IMR-90 (cell line): ENCODE measurements at regions of chr16 and their contacts with region 1.

Region 1: DNA sequence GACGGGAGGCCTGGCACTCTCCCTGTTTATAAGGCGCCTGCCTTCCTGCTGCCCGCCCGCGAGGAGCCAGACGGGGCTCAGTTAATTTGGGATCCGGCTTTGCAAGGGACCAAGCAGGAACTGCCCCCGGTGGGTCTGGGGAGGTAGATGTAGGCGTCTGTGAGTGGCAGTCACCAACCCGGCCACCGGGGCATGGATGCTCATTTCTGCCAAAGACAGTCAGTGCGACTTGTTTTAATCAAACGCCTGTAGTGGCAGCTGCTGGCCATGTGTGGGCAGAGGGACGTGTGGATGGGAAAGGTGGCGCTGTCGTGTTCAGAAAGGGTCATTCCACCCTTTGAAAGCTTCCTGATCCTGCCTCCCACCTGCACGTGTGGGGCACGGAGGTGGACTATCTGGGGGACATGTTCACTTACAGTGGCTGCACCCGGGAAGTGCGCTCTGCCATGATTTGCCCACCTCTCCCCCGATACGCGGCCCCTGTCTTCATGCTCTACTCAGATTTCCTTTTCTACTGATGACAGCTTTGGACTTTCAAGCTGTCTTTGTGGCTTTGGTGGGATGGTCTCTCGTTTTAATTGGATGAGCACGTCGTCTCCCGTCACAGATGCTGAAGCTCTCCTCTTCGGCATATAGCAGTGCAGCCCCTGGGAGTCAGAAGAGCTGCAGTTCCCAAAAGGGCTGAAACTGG is 60.3 kb upstream of the CIBAR2 start:
- DNase-seq: peak; percentile 53
- ATAC-seq: no peak
- H3K4me3 ChIP-seq: peak overlapping the region; percentile 51
- H3K27ac ChIP-seq: peak overlapping the region; percentile 74
- H3K4me1 ChIP-seq: peaks cover 46% of the 10 kb centered on the region
- H3K27me3 ChIP-seq: no peaks in the 10 kb centered on the region
- CTCF ChIP-seq: peak; percentile 42
- POLR2A ChIP-seq: no peak; the same call in 1 of the 2 replicates
- RAD21 ChIP-seq: peak; percentile 29

Region 2: DNA sequence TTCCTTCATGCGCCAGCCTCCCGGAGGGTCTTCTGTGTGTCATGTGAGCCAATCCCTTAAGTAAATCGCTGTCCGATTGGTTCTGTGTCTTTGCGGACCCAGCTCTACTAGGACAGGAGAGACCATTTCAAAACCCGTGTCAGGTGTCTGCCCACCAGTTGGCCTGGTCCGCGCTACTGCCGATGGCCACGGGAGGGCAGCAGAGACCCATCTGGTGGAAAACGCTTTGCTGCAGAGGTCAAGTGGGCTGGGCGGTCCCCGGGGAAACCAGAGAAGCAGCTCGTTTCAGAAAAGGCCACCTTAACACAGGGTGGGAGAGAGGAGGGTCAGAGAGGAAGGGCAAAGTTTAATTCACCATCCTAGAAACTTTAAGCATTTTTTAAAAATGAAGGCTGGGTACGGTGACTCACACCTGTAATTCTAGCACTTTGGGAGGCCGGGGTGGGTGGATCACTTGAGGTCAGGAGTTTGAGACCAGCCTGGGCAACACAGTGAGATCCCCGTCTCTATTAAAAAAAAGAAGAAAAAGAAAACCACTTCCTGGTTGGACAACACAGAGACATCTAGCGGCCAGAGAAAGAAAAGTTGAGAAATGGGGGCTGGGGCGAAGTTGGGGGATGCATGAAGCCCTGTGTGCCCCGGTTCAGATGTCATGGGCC is 57.6 kb before region 1 on chr16:
- CTCF ChIA-PET with region 1: interaction called, 13 read pairs
- POLR2A ChIA-PET with region 1: no interaction called
- dilution Hi-C with region 1: no loop called
- in situ Hi-C with region 1: no loop called
- intact Hi-C with region 1: no loop called
- DNase-seq: peak; percentile 74
- ATAC-seq: peak; percentile 99
- H3K4me3 ChIP-seq: no peak overlapping the region
- H3K27ac ChIP-seq: peak overlapping the region; percentile 5; the same call in 1 of the 2 replicates
- H3K4me1 ChIP-seq: no peaks in the 10 kb centered on the region; the same call in 1 of the 2 replicates
- H3K27me3 ChIP-seq: no peaks in the 10 kb centered on the region
- CTCF ChIP-seq: peak; percentile 97
- POLR2A ChIP-seq: peak; percentile 51; the same call in 1 of the 2 replicates
- RAD21 ChIP-seq: peak; percentile 99

Region 3: DNA sequence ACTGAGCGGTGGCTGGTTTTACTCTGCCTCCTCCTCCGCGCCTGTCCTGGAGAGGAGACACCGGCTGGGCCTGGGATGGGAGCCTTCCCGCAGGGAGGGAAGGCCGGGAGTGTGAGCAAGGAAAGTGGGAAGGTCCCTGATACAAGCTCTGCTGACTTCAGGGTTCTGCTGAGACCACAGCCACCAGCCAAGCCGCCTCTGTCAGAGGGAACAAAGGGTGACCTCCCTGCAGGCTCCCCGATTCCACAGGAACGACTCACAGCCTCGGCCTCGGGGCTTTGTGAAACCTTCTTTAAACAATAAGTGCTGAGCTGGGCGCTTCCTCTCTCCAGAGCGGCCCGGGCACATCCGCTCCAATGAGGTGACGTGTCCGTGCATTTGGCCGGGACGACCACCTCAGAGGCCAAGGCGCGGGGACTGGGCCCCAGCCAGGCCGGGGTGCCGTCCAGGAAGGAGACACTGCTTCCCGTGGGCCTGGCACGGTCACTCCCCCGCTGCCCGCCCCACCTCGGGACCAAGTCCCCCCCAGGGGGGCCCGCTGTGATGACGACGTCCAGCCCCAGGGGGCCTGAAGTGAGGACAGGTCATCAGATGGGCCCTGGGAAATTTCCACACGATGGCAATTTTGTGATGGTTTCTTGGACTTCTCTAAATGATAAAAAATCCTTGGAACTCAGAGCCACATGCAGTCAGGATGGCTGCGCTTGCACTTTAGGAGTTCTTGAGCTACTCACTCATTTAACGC is 48.5 kb before region 1 on chr16:
- CTCF ChIA-PET with region 1: interaction called, 3 read pairs
- POLR2A ChIA-PET with region 1: interaction called, 5 read pairs
- dilution Hi-C with region 1: no loop called
- in situ Hi-C with region 1: no loop called
- intact Hi-C with region 1: loop called (anchors 2 kb)
- DNase-seq: peak; percentile 87
- ATAC-seq: peak; percentile 79
- H3K4me3 ChIP-seq: no peak overlapping the region
- H3K27ac ChIP-seq: peak overlapping the region; percentile 87
- H3K4me1 ChIP-seq: peaks cover 20% of the 10 kb centered on the region
- H3K27me3 ChIP-seq: no peaks in the 10 kb centered on the region
- CTCF ChIP-seq: no peak
- POLR2A ChIP-seq: peak; percentile 37
- RAD21 ChIP-seq: no peak

Region 4: DNA sequence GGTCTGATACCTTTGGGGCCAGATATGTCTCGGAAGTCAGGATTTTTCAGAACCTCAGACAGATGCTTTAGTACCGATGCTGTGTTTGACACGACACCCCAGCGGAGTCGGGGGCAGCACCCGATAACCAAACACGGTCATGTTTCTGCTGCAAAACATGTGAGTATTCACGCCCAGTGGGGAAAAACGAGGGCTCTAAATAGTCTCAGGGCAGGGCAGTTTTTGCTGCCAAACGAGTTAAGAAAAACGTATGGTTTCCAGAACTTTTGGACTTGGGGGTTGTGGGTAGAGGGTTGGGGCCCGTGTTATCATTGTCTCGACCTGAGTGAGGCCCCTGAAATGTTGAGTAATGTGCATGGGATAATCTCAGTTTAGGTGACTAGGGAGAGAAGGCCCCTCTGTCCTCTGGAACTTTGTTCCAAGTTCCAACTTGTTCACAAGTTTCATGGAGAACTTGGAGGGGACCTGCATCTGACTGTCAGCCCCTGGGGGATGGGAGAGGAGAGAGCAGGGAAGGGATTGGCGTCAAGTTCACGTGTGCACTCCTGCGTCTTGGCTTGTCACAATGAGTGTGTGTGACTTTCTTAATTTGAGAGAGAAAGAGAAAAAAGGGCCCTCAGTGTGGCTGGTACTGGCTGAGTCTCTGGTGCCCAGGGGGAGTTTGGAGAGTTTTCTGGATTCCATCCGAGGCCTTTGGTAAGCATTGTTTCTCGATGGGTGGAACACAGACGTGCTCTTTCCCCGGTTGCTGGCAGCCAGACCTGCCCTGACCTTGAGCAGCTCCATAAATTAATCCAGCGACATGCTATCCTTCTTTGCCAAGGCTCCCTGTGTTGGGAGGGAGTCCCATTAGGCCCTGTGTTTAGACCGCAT is 23.5 kb after region 1 on chr16:
- CTCF ChIA-PET with region 1: interaction called, 6 read pairs
- POLR2A ChIA-PET with region 1: no interaction called
- dilution Hi-C with region 1: no loop called
- in situ Hi-C with region 1: no loop called
- intact Hi-C with region 1: loop called (anchors 2 kb)
- DNase-seq: no peak
- ATAC-seq: no peak
- H3K4me3 ChIP-seq: no peak overlapping the region
- H3K27ac ChIP-seq: no peak overlapping the region
- H3K4me1 ChIP-seq: peaks cover 63% of the 10 kb centered on the region
- H3K27me3 ChIP-seq: no peaks in the 10 kb centered on the region
- CTCF ChIP-seq: no peak
- POLR2A ChIP-seq: no peak
- RAD21 ChIP-seq: no peak

Region 5: GRCh38 chr16:85204242-85205010 is 31.8 kb after region 1 on chr16:
- CTCF ChIA-PET with region 1: interaction called, 3 read pairs
- POLR2A ChIA-PET with region 1: interaction called, 3 read pairs
- dilution Hi-C with region 1: no loop called
- in situ Hi-C with region 1: no loop called
- intact Hi-C with region 1: loop called (anchors 1 kb)
- DNase-seq: peak; percentile 93
- ATAC-seq: no peak
- H3K4me3 ChIP-seq: no peak overlapping the region
- H3K27ac ChIP-seq: peak overlapping the region; percentile 74
- H3K4me1 ChIP-seq: peaks cover 66% of the 10 kb centered on the region
- H3K27me3 ChIP-seq: no peaks in the 10 kb centered on the region
- CTCF ChIP-seq: no peak
- POLR2A ChIP-seq: no peak
- RAD21 ChIP-seq: peak; percentile 9; the same call in 1 of the 2 replicates

Region 6: GRCh38 chr16:85220125-85220839 is 47.7 kb after region 1 on chr16:
- CTCF ChIA-PET with region 1: interaction called, 3 read pairs
- POLR2A ChIA-PET with region 1: no interaction called
- dilution Hi-C with region 1: no loop called
- in situ Hi-C with region 1: no loop called
- intact Hi-C with region 1: loop called (anchors 5 kb)
- DNase-seq: peak; percentile 85
- ATAC-seq: peak; percentile 85
- H3K4me3 ChIP-seq: peak overlapping the region; percentile 2; the same call in 1 of the 2 replicates
- H3K27ac ChIP-seq: peak overlapping the region; percentile 93
- H3K4me1 ChIP-seq: peaks cover 34% of the 10 kb centered on the region
- H3K27me3 ChIP-seq: no peaks in the 10 kb centered on the region
- CTCF ChIP-seq: no peak
- POLR2A ChIP-seq: no peak
- RAD21 ChIP-seq: no peak

Region 7: DNA sequence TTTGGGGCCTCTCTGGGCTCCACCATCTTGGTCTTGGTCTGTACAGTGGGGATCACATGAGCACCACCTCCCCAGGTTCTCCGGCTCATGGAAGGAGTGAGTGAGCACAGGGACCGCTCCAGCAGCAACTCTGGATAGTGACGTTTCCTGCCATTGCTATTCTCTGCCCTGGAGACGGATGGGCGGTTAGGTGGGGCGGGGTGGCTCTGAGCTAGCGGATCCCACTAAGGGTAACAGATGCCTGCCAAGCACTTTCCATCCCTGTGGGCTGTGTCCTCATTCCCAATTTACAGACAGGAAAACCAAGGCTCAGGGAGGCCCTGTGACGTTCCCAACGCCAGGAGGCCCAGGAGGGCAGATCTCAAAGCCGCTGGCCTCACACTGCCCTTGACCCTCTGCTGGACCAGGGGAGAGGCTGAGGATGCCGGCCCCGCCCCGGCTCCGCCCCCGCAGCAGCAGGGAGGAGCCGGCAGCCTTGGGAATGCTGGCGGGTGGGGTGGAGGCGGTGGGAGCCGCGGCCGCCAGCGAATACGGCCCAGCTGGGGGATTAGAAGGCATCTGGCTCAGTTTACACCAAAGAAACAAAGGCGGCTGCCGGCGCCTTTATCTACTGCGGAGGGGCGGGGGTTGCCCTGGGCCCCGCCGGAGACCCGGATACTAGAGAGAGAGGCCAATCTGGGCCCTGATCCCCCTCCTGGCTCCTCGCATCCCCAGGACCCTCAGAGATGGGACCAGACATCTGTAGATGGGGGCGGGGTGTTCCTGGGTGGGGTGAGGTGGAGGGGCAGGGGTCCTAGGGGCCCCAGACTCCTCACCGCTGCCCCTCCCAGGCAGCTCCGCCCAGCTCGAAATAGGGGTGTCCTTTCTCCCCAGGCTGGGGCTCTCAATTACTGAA is 62.0 kb after region 1 on chr16:
- CTCF ChIA-PET with region 1: interaction called, 5 read pairs
- POLR2A ChIA-PET with region 1: no interaction called
- dilution Hi-C with region 1: no loop called
- in situ Hi-C with region 1: no loop called
- intact Hi-C with region 1: loop called (anchors 1 kb)
- DNase-seq: peak; percentile 85
- ATAC-seq: peak; percentile 70
- H3K4me3 ChIP-seq: peak overlapping the region; percentile 41; the same call in 1 of the 2 replicates
- H3K27ac ChIP-seq: peak overlapping the region; percentile 87
- H3K4me1 ChIP-seq: peaks cover 48% of the 10 kb centered on the region
- H3K27me3 ChIP-seq: no peaks in the 10 kb centered on the region
- CTCF ChIP-seq: no peak
- POLR2A ChIP-seq: no peak
- RAD21 ChIP-seq: peak; percentile 12; the same call in 1 of the 2 replicates

Region 8: DNA sequence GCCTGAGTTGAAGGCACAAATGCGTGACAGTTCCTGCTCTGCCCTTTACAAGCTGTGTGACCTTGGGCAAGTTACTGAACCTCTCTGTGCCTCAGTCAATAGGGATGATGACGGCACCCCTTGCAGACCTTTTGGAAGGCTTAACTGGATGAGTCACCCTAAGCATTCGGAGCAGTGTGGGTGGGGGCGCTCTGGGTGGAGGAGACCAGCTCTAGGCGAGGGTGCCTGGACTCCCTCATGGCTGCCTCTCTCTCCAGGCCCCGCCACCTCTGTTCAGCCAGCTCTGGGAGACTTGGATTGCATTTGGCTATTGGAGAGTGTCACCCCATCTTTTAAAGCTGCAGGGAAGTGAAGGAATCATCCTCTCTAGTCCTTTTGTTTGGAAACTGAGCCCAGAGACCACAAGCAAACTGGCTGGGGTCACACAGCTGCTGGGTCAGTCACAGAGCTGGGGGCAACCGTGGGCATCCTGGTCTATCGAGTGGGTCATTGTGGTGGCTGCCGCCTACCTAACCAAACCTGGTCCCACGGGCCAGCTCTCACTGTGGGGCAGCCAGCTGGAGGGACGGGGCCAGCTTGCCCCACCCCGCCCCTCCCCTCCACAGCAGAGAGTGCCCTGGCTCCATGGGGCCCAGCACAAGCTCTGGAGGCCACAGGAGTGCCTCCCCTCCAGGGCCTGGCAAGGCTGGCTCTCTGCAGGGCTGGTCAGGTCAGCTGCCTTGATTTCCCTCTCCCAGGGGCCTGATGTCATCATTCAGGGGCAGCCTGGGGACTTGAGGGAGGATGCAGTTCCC is 420.3 kb after region 1 on chr16:
- CTCF ChIA-PET with region 1: no interaction called
- POLR2A ChIA-PET with region 1: no interaction called
- dilution Hi-C with region 1: no loop called
- in situ Hi-C with region 1: no loop called
- intact Hi-C with region 1: no loop called
- DNase-seq: peak; percentile 59
- ATAC-seq: peak; percentile 80
- H3K4me3 ChIP-seq: no peak overlapping the region
- H3K27ac ChIP-seq: no peak overlapping the region
- H3K4me1 ChIP-seq: peaks cover 5% of the 10 kb centered on the region
- H3K27me3 ChIP-seq: no peaks in the 10 kb centered on the region
- CTCF ChIP-seq: no peak
- POLR2A ChIP-seq: no peak
- RAD21 ChIP-seq: no peak